ENCODE measurements at regions of chr17 and their contacts with region 1.

Region 1: GRCh38 chr17:42773290-42774035 is at the start of gene VPS25:
- DNase-seq: peak; percentile 71
- H3K4me3 Mint-ChIP-seq: peak within 1 kb of the TSS; percentile 99
- H3K27ac Mint-ChIP-seq: peak within 1 kb of the TSS; percentile 96
- H3K4me1 Mint-ChIP-seq: peaks cover 27% of the 10 kb centered on the region
- H3K27me3 Mint-ChIP-seq: no peaks in the 10 kb centered on the region
- total RNA-seq, gene VPS25: 93.6 and 97.0 TPM in 2 replicates

Region 2: DNA sequence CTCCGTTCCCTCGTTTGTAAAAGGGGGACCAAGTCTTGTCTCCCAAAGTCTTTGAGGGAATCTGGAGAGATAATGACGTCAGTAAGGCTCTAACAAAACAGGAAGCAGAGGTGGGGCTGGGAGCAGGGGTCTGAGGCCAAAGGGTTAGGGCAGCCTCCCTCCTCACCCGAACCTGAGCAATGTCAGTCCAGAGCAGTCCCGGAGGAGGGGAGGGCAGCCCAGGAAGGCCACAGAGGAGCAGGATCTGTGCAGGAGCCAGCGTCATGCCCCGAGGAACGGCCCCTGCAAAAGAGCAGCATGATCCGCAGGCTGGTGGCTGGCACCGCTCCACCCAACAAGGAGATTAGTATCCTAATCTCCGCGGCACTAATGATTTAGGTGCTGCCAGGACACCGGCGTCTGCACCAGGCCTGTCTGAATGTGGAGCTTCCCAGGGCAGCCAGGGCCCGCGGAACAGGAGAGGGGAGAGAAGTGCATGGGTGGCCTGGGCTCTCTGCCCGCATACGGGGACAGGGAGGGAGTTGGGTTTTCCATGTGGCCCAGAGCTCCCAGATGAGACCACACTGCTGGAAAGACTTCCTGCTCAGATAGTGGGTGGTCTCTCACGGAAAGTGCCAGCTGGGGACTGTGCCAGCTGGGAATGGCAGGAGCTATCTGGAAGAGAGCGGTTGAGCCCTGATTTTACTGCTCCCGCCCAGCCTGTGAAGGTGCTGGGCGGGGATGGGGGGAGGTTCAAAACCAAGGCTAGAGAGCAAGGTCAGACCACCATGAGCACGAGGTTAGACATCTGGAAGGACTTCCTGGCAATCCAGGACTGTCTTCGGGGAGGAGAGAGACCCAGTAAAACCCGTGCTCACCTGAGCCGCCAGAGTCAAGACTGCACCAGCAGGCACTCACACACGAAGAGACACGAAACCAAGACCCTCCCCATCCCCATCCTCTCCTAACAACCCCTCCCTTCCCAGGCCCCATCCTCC is 1138.1 kb before region 1 on chr17:
- intact Hi-C with region 1: no loop called
- DNase-seq: no peak
- H3K4me3 Mint-ChIP-seq: no peak overlapping the region
- H3K27ac Mint-ChIP-seq: no peak overlapping the region
- H3K4me1 Mint-ChIP-seq: no peaks in the 10 kb centered on the region
- H3K27me3 Mint-ChIP-seq: no peaks in the 10 kb centered on the region

Region 3: GRCh38 chr17:42744806-42745617 is 28.5 kb before region 1 on chr17 and contains the start of gene EZH1:
- intact Hi-C with region 1: loop called (anchors 1 kb)
- DNase-seq: peak; percentile 93
- H3K4me3 Mint-ChIP-seq: peak within 1 kb of the TSS; percentile 91
- H3K27ac Mint-ChIP-seq: peak within 1 kb of the TSS; percentile 83
- H3K4me1 Mint-ChIP-seq: peaks cover 15% of the 10 kb centered on the region
- H3K27me3 Mint-ChIP-seq: peaks cover 25% of the 10 kb centered on the region
- total RNA-seq, gene EZH1: 35.6 and 40.0 TPM in 2 replicates

Region 4: DNA sequence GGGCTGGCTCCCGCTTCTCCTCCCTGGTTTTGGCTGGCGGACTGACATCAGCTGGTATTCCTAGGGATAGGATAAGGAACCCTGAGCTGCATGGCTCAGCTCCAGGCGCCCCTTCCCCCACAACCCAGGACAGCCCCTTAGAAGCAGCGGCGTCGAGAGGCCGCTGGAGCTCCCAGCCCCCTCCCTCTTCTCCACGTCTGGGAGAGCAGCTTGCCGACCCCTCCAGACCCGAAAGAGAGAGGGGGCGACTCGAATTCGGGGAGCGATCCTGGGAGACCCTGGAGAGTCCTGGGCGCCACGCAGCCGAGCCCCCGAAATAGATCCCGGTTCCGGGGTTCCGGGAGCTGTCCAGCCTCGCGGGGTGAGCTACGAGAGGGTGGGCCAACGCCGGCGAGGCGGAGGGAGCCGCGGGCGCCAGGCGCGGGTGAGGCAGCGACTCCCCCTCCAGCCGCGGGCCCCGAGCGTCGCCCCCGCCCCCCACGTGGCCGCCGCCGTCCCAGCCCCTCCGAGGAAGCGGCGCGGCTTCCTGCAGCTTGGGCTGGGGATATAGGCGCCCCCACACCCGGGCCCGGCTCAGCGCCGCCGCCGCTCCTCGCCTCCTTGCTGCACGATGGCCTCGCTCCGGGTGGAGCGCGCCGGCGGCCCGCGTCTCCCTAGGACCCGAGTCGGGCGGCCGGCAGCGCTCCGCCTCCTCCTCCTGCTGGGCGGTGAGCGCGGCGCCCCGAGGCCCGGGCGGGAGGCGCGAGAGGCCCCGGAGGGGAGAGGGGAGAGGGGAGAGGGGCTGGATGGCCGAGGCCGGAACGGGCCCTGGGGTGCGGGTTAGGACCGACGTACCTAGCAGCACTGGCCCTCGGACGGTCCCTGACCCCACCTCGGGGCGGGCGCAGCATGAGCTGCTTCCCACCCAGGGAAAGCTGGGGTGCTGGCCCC is 12.5 kb before region 1 on chr17 and contains the start of gene RAMP2:
- intact Hi-C with region 1: loop called (anchors 1 kb)
- DNase-seq: no peak
- H3K4me3 Mint-ChIP-seq: peak within 1 kb of the TSS; percentile 54
- H3K27ac Mint-ChIP-seq: no peak within 1 kb of the TSS
- H3K4me1 Mint-ChIP-seq: peaks cover 6% of the 10 kb centered on the region
- H3K27me3 Mint-ChIP-seq: peaks cover 55% of the 10 kb centered on the region
- total RNA-seq, gene RAMP2: not detected in 2 replicates

Region 5: DNA sequence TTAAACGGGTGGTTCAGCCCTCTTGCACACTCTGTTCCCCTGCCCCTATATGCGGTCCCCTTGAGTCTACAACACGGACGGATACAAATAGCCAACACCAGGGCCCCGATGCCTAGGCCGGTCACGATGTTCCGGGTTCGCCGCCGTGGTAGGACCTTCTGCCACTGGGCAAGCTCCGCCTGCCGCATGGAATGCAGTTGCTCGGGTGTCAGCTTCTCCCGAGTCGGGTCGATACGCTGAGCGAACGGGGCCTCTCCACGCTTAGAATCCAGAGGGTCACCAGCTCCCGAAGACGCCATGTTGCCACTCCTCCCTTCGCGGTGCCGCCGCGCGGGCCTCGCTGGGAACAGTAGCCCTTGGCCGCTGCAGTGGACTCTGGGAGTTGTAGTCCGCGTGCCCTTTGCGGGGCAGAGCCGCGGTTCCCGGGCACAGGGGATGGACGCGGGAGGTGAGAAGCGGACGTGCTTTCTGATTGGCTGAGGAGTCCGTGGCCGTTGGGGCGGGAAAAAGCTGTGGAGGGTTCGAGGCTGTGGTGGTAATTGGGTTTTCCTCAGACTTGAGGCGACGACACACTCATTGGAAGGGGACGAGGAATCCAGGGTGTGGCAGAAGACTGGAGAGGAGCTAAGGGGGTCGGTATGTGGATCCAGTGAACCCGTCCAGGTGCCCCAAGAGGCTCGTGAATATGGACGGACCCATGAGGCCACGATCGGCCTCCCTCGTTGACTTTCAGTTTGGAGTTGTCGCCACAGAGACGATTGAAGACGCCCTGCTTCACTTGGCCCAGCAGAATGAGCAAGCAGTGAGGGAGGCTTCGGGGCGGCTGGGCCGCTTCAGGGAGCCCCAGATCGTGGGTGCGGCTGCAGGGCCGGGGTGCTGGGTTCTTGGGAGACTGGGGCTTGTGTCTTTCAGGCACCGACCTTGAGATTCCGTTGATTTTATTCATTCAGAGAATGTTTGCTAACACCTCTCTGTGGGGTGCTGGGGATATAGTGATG is 25.2 kb after region 1 on chr17 and contains the starts of genes CNTD1 and COA3:
- intact Hi-C with region 1: loop called (anchors 1 kb)
- DNase-seq: peak; percentile 73
- H3K4me3 Mint-ChIP-seq: peak within 1 kb of the TSS; percentile 90
- H3K27ac Mint-ChIP-seq: peak within 1 kb of the TSS; percentile 56
- H3K4me1 Mint-ChIP-seq: peaks cover 19% of the 10 kb centered on the region
- H3K27me3 Mint-ChIP-seq: peaks cover 3% of the 10 kb centered on the region
- total RNA-seq, gene CNTD1: not detected in 2 replicates
- total RNA-seq, gene COA3: 53.5 and 59.3 TPM in 2 replicates

Region 6: DNA sequence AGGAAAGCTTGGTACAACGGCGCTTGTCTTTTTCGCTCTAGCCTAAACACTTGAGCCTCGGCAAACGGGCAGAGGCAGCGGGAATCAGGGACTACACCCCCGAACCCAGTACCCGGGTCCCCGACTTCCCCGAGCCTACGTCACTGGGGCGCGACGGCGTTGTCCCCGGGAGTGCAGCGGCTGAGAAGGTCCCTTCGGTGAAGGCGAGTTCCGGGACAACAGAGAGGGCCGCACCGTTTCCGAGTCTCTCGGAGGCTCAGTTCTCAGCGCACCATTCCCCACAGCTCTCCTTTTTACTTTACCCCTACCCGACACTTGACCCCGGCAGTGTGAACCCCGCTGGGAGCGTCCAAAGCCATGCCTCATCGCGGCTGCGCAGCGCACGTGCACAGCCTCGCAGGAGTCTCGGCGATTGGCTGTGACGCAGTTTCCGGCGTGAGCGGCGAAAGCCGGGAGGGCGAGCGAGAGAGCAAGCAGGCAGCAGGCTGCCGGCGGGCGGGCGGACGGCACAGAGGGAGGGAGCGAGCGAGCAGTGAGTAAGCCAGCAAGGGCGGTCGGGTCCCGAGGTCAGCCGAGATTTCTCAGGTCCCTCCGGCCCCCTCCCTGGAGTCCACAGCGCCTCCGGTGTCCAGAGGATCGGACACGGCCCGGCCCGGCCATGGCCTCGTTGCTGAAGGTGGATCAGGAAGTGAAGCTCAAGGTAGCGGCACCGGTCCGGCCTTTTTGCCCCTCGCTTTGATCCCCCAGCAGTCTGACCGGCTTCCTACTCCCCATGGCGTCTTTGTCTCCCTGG is 59.7 kb after region 1 on chr17 and contains the start of gene PSME3:
- intact Hi-C with region 1: no loop called
- DNase-seq: peak; percentile 88
- H3K4me3 Mint-ChIP-seq: peak within 1 kb of the TSS; percentile 90
- H3K27ac Mint-ChIP-seq: peak within 1 kb of the TSS; percentile 93
- H3K4me1 Mint-ChIP-seq: peaks cover 23% of the 10 kb centered on the region
- H3K27me3 Mint-ChIP-seq: peaks cover 3% of the 10 kb centered on the region
- total RNA-seq, gene PSME3: 217 and 220 TPM in 2 replicates